ENCODE measurements at regions of chr4 and their contacts with region 1.

Region 1: DNA sequence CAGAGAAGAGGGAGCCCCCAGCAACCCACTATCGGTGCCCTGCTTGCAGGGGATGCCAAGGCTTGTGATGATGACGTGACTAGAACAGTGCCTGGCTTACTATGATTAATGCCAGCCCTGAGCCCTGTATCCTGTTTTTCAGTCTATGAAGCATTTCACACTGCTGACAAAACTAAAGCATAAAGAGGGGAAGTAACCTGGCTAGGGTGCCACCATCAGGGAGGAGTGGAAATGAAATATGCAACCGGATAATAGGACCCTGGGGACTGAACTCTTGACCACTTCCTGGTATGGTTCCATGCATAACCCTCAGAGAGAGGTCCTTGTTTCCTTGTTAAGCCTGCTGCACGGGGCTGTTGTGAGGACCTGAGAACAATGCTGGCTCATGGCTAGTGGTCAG is 50.3 kb downstream of the MED28 start:
- DNase-seq: no peak
- ATAC-seq: no peak
- H3K4me3 ChIP-seq: no peak overlapping the region
- H3K27ac ChIP-seq: no peak overlapping the region
- H3K4me1 ChIP-seq: no peaks in the 10 kb centered on the region
- H3K27me3 ChIP-seq: no peaks in the 10 kb centered on the region
- CTCF ChIP-seq: no peak

Region 2: GRCh38 chr4:17708992-17709762 is 44.4 kb after region 1 on chr4:
- intact Hi-C with region 1: loop called in 1 of 2 experiments (anchors 1 kb)
- DNase-seq: no peak
- ATAC-seq: no peak
- H3K4me3 ChIP-seq: no peak overlapping the region
- H3K27ac ChIP-seq: no peak overlapping the region
- H3K4me1 ChIP-seq: no peaks in the 10 kb centered on the region
- H3K27me3 ChIP-seq: peaks cover 0 to 6% (median 0%) of the 10 kb centered on the region in 3 donors
- CTCF ChIP-seq: no peak

Region 3: DNA sequence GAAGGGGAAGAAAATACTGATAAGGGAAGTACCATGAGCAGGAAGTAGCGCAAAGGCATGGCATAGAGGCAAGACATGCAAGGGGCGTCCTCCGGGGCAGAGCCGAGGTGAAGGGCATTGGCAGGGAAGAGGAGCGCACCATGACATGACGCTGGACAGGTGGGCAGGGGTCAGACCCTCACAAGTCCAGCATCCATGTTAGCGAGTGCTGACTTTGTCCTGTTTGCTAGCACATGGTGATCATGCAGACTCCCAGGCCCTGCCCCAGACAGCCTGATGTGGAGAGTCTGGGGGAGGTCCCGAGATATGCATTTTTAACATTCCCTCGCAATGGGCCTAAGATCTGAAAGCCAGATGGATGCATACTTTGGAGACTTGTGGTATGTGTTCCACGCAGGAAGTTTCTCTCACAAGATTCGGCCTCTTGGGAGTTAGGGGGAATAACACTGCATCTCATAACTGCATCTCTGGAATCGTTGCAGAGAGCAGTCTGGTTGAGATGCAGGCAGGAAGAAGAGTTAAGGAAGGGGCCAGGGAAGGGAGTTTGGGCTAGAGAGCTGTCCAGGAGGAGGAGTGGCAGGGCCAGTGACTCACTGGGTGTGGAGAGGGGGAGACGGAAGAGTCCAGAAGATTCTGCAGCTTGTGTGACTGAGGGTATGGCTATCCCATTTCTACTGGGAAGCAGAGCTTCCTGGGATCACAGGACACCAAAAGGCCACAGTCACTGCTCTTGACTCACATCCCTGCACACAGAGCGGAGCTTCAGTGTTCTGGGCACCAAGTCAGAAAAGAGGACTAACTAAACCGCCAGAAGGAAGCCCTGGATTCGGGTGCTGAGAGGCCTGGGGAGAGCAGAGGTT is 57.0 kb after region 1 on chr4:
- intact Hi-C with region 1: no loop called
- DNase-seq: no peak
- ATAC-seq: peak in 3 of 4 donors; percentile 46 to 64 (median 57)
- H3K4me3 ChIP-seq: no peak overlapping the region
- H3K27ac ChIP-seq: no peak overlapping the region
- H3K4me1 ChIP-seq: no peaks in the 10 kb centered on the region
- H3K27me3 ChIP-seq: no peaks in the 10 kb centered on the region
- CTCF ChIP-seq: no peak